Activated CD4-positive, alpha-beta memory T cell treated with anti-CD3 and anti-CD28 coated beads for 36 hours (primary cell): ENCODE measurements at regions of chr13 and their contacts with region 1.

Region 1: GRCh38 chr13:100674848-100675660 is 459 bp upstream of the TMTC4 start:
- DNase-seq: peak; percentile 100
- H3K4me3 Mint-ChIP-seq: peak overlapping the region; percentile 78
- H3K27ac Mint-ChIP-seq: peak overlapping the region; percentile 78
- H3K4me1 Mint-ChIP-seq: peaks cover 21% of the 10 kb centered on the region
- H3K27me3 Mint-ChIP-seq: peaks cover 5% of the 10 kb centered on the region

Region 2: GRCh38 chr13:99228737-99229691 is 1446.0 kb before region 1 on chr13:
- CTCF ChIA-PET with region 1: no interaction called
- POLR2A ChIA-PET with region 1: no interaction called
- intact Hi-C with region 1: loop called (anchors 10 kb)
- DNase-seq: no peak
- H3K4me3 Mint-ChIP-seq: peak overlapping the region; percentile 64
- H3K27ac Mint-ChIP-seq: peak overlapping the region; percentile 68
- H3K4me1 Mint-ChIP-seq: peaks cover 71% of the 10 kb centered on the region
- H3K27me3 Mint-ChIP-seq: no peaks in the 10 kb centered on the region

Region 3: DNA sequence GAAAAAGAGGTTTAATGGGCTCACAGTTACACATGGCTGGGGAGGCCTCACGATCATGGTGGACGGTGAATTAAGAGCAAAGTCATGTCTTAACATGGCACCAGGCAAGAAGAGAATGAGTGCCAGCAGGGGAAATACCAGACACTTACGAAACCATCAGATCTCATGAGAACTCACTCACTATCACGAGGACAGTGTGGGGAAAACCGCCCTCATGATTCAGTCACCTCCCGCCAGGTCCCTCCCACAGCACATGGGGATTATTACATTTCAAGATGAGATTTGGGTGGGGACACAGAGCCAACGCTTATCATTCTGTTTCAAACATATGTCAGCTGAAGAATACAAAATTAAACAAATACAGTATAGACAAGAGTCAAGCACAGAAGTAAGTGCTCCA is 421.1 kb before region 1 on chr13:
- CTCF ChIA-PET with region 1: no interaction called
- POLR2A ChIA-PET with region 1: no interaction called
- intact Hi-C with region 1: no loop called
- DNase-seq: no peak
- H3K4me3 Mint-ChIP-seq: no peak overlapping the region
- H3K27ac Mint-ChIP-seq: no peak overlapping the region
- H3K4me1 Mint-ChIP-seq: no peaks in the 10 kb centered on the region
- H3K27me3 Mint-ChIP-seq: no peaks in the 10 kb centered on the region

Region 4: DNA sequence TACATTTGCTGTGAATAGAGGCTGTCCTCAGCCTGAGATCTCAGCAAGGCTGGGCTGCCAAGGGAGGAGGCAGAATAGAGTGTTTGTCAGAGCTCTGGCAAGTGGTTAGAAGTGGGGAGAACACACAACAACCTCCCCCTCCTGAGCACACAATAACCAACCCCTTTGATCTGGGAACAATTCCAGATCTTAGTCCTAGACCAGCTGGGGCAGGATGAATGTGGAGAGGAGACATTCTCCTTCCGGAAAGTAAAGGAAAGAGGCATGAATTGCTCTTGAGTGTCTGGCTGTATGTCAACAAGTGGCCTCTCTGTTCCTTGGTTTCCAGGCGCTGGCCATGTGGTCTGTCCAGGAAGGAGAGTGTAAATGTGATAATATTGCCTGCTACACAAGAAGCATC is 114.4 kb after region 1 on chr13:
- CTCF ChIA-PET with region 1: no interaction called
- POLR2A ChIA-PET with region 1: no interaction called
- intact Hi-C with region 1: no loop called
- DNase-seq: no peak
- H3K4me3 Mint-ChIP-seq: no peak overlapping the region
- H3K27ac Mint-ChIP-seq: no peak overlapping the region
- H3K4me1 Mint-ChIP-seq: no peaks in the 10 kb centered on the region
- H3K27me3 Mint-ChIP-seq: peaks cover 24% of the 10 kb centered on the region

Region 5: GRCh38 chr13:100921139-100921538 is 246.1 kb after region 1 on chr13:
- CTCF ChIA-PET with region 1: no interaction called
- POLR2A ChIA-PET with region 1: no interaction called
- intact Hi-C with region 1: no loop called
- DNase-seq: no peak
- H3K4me3 Mint-ChIP-seq: no peak overlapping the region
- H3K27ac Mint-ChIP-seq: no peak overlapping the region
- H3K4me1 Mint-ChIP-seq: no peaks in the 10 kb centered on the region
- H3K27me3 Mint-ChIP-seq: peaks cover 8% of the 10 kb centered on the region